ENCODE measurements at regions of chr7 and their contacts with region 1.

Region 1: DNA sequence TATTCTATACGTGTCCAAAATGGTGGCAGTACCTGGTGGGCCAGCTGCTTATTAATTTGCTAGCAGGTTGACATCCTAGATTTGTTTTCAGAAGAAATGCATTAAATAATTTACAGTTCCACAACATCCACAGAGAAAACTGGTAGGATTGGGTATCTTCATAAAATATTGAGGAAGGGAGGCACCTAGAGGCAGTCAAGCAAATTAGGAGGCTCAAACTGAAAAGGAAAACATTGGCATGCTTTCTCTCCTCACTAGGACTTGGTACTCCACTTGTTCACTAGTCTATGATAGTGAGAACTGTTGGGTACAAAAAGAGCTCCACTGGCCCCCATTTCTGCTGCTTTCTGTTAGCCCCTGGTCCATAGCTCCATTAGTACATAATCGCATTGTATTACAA is 18.3 kb upstream of the LRGUK start:
- DNase-seq: no peak

Region 2: DNA sequence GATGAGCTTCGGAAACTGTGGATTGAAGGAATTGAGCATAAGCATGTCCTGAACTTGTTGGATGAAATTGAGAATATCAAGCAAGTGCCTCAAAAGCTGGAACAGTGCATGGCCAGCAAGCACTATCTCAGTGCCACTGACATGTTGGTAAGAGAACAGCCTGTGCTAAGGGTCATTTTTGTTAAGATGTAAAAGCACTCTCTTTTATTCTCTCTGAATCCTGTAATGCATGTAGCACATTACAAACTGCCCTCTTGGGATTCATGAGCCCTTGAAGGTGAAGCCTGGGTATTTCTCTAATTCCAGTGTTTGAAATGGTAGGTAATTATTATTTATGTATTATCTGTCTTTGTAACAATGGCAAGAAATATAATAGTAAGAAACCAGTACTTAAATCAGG is 819.8 kb before region 1 on chr7:
- intact Hi-C with region 1: loop called in 1 of 2 experiments (anchors 5 kb)
- DNase-seq: no peak

Region 3: DNA sequence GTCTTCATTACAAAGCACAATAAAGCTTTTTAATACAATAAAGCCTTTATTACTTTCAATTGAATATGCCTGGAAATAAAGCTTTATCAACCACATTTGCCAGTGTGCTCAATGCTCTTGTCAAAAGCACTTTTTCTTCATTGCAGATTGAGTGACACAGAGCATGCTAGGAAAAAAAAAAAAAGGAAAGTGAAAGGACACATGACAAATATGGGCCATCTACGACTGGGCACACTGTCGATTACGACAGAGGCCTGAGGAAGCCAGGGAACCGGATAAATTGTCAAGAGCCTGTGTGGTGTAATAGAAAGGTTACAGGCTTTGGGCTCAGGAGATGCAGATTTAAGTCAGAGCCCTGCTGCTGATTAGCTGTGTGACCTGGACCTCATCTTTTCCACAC is 66.5 kb before region 1 on chr7:
- intact Hi-C with region 1: no loop called
- DNase-seq: no peak

Measured in posterior vena cava (tissue), 2 donors.